ENCODE measurements at regions of chr6 and their contacts with region 1.

Region 1: GRCh38 chr6:134047673-134048072 is 4.8 kb downstream of the SLC2A12 start:
- DNase-seq: no peak
- H3K4me3 ChIP-seq: no peak overlapping the region
- H3K4me3 Mint-ChIP-seq: no peak overlapping the region
- H3K27ac Mint-ChIP-seq: no peak overlapping the region
- H3K4me1 ChIP-seq: no peaks in the 10 kb centered on the region
- H3K4me1 Mint-ChIP-seq: peaks cover 4% of the 10 kb centered on the region
- H3K27me3 ChIP-seq: no peaks in the 10 kb centered on the region
- H3K27me3 Mint-ChIP-seq: peaks cover 4% of the 10 kb centered on the region
- CTCF ChIP-seq: no peak

Region 2: GRCh38 chr6:134035823-134036296 is 11.8 kb before region 1 on chr6:
- CTCF ChIA-PET with region 1: no interaction called
- POLR2A ChIA-PET with region 1: interaction called, 10 read pairs
- intact Hi-C with region 1: no loop called
- DNase-seq: no peak
- H3K4me3 ChIP-seq: no peak overlapping the region
- H3K4me3 Mint-ChIP-seq: no peak overlapping the region
- H3K27ac Mint-ChIP-seq: no peak overlapping the region
- H3K4me1 ChIP-seq: no peaks in the 10 kb centered on the region
- H3K4me1 Mint-ChIP-seq: no peaks in the 10 kb centered on the region
- H3K27me3 ChIP-seq: no peaks in the 10 kb centered on the region
- H3K27me3 Mint-ChIP-seq: peaks cover 3% of the 10 kb centered on the region
- CTCF ChIP-seq: no peak

Region 3: GRCh38 chr6:134247231-134247833 is 199.7 kb after region 1 on chr6:
- CTCF ChIA-PET with region 1: no interaction called
- POLR2A ChIA-PET with region 1: no interaction called
- intact Hi-C with region 1: no loop called
- DNase-seq: no peak
- H3K4me3 ChIP-seq: no peak overlapping the region
- H3K4me3 Mint-ChIP-seq: no peak overlapping the region
- H3K27ac Mint-ChIP-seq: no peak overlapping the region
- H3K4me1 ChIP-seq: peaks cover 20% of the 10 kb centered on the region
- H3K4me1 Mint-ChIP-seq: peaks cover 18% of the 10 kb centered on the region
- H3K27me3 ChIP-seq: no peaks in the 10 kb centered on the region
- H3K27me3 Mint-ChIP-seq: no peaks in the 10 kb centered on the region
- CTCF ChIP-seq: no peak